CD8-positive, alpha-beta T cell (primary cell): ENCODE measurements at regions of chr14 and their contacts with region 1.

Region 1: GRCh38 chr14:55446218-55446654 is 5.8 kb upstream of the TBPL2 start:
- DNase-seq: peak; percentile 3 to 72 (median 53)
- ATAC-seq: no peak
- H3K4me3 ChIP-seq: no peak overlapping the region
- H3K4me3 Mint-ChIP-seq: no peak overlapping the region
- H3K27ac ChIP-seq: no peak overlapping the region
- H3K27ac Mint-ChIP-seq: no peak overlapping the region
- H3K4me1 ChIP-seq: no peaks in the 10 kb centered on the region
- H3K4me1 Mint-ChIP-seq: peaks cover 3% of the 10 kb centered on the region
- H3K27me3 ChIP-seq: no peaks in the 10 kb centered on the region
- H3K27me3 Mint-ChIP-seq: peaks cover 3% of the 10 kb centered on the region
- CTCF ChIP-seq: peak; percentile 80

Region 2: DNA sequence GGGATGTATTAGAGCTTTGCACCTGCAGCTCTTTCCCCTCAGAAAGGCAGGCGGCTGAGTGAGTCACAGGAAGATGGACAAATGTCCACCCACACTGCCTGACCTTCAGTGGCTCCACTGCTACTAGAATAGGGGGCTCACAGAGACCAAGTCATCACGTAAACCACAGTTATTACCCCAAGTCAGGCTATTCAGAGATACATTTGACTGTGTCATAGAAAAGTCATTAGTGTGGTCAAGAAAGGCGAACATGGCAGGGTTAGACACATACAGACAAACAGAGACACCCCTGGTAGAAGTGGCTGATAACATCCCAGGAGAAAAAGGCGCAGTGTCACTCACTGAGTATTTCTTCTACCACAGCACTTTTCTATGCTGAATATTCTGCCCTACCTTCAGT is 579.6 kb before region 1 on chr14:
- CTCF ChIA-PET with region 1: no interaction called
- POLR2A ChIA-PET with region 1: no interaction called
- intact Hi-C with region 1: no loop called
- DNase-seq: no peak
- ATAC-seq: no peak
- H3K4me3 ChIP-seq: no peak overlapping the region
- H3K4me3 Mint-ChIP-seq: no peak overlapping the region
- H3K27ac ChIP-seq: no peak overlapping the region
- H3K27ac Mint-ChIP-seq: no peak overlapping the region
- H3K4me1 ChIP-seq: peaks cover 9% of the 10 kb centered on the region
- H3K4me1 Mint-ChIP-seq: peaks cover 31% of the 10 kb centered on the region
- H3K27me3 ChIP-seq: no peaks in the 10 kb centered on the region
- H3K27me3 Mint-ChIP-seq: no peaks in the 10 kb centered on the region
- CTCF ChIP-seq: no peak

Region 3: DNA sequence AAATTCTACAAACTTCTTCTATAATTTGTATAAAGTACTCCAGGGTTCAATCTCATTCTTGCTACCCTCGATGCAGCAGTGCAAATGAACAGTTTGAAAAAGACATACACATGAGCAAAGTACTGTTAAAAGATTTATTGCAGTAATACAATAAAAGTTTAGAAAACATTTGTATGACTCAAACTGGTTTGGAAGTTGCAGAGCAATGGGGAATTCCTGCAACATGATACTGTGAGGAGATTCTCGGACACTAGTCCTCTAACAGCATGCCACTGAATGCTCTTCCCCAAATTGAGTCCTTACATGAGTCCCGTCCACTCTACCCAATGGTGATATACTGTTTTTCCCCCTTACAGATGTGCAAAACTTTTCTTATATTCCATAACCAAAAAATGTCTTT is 80.0 kb before region 1 on chr14:
- CTCF ChIA-PET with region 1: no interaction called
- POLR2A ChIA-PET with region 1: no interaction called
- intact Hi-C with region 1: no loop called
- DNase-seq: no peak
- ATAC-seq: no peak
- H3K4me3 ChIP-seq: no peak overlapping the region
- H3K4me3 Mint-ChIP-seq: no peak overlapping the region
- H3K27ac ChIP-seq: no peak overlapping the region
- H3K27ac Mint-ChIP-seq: no peak overlapping the region
- H3K4me1 ChIP-seq: no peaks in the 10 kb centered on the region
- H3K4me1 Mint-ChIP-seq: no peaks in the 10 kb centered on the region
- H3K27me3 ChIP-seq: no peaks in the 10 kb centered on the region
- H3K27me3 Mint-ChIP-seq: no peaks in the 10 kb centered on the region
- CTCF ChIP-seq: no peak

Region 4: DNA sequence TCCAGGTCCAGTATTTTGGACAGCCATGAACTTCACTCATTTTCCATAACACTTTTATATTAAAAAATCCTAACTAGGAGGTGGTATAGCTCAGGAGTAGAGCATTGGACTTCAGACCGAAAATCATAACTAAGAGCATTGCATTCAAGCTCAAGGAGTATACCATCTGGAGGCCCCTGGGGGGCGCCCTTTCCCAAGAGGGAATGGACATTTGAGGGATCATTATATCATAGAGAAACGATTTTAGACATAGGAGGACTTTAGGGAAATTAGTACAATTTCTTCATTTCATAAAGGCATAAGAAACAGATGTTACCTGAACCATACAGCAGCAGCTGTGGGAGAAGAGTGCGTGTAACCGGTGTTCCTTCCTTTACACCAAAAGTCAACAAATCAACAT is 29.4 kb before region 1 on chr14:
- CTCF ChIA-PET with region 1: interaction called, 10 read pairs
- POLR2A ChIA-PET with region 1: no interaction called
- intact Hi-C with region 1: no loop called
- DNase-seq: peak in 3 of 9 experiments; percentile 13 to 36 (median 31)
- ATAC-seq: no peak
- H3K4me3 ChIP-seq: no peak overlapping the region
- H3K4me3 Mint-ChIP-seq: no peak overlapping the region
- H3K27ac ChIP-seq: no peak overlapping the region
- H3K27ac Mint-ChIP-seq: no peak overlapping the region
- H3K4me1 ChIP-seq: peaks cover 6% of the 10 kb centered on the region
- H3K4me1 Mint-ChIP-seq: peaks cover 8% of the 10 kb centered on the region
- H3K27me3 ChIP-seq: no peaks in the 10 kb centered on the region
- H3K27me3 Mint-ChIP-seq: no peaks in the 10 kb centered on the region
- CTCF ChIP-seq: peak; percentile 44

Region 5: DNA sequence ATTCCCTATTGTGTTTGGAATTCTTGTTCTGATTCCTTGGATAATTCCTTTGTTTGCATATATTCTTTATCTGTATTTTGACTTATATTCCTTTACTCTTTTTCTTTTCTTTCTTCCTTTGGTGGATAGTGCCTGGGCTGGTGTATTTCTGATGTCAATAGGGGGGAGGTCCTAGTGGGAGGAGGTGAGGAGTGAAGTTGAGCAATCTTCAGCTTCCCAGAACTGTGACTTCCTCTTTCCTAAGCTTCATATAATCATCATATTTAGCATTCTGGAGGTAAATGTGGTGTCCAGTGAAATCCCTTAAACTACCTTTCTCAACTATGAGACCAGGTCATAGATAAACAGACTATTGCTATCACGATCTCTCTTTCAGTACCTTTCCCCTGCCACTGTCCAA is 23.8 kb after region 1 on chr14:
- CTCF ChIA-PET with region 1: interaction called, 25 read pairs
- POLR2A ChIA-PET with region 1: no interaction called
- intact Hi-C with region 1: no loop called
- DNase-seq: no peak
- ATAC-seq: no peak
- H3K4me3 ChIP-seq: no peak overlapping the region
- H3K4me3 Mint-ChIP-seq: no peak overlapping the region
- H3K27ac ChIP-seq: no peak overlapping the region
- H3K27ac Mint-ChIP-seq: no peak overlapping the region
- H3K4me1 ChIP-seq: no peaks in the 10 kb centered on the region
- H3K4me1 Mint-ChIP-seq: no peaks in the 10 kb centered on the region
- H3K27me3 ChIP-seq: no peaks in the 10 kb centered on the region
- H3K27me3 Mint-ChIP-seq: no peaks in the 10 kb centered on the region
- CTCF ChIP-seq: no peak

Region 6: DNA sequence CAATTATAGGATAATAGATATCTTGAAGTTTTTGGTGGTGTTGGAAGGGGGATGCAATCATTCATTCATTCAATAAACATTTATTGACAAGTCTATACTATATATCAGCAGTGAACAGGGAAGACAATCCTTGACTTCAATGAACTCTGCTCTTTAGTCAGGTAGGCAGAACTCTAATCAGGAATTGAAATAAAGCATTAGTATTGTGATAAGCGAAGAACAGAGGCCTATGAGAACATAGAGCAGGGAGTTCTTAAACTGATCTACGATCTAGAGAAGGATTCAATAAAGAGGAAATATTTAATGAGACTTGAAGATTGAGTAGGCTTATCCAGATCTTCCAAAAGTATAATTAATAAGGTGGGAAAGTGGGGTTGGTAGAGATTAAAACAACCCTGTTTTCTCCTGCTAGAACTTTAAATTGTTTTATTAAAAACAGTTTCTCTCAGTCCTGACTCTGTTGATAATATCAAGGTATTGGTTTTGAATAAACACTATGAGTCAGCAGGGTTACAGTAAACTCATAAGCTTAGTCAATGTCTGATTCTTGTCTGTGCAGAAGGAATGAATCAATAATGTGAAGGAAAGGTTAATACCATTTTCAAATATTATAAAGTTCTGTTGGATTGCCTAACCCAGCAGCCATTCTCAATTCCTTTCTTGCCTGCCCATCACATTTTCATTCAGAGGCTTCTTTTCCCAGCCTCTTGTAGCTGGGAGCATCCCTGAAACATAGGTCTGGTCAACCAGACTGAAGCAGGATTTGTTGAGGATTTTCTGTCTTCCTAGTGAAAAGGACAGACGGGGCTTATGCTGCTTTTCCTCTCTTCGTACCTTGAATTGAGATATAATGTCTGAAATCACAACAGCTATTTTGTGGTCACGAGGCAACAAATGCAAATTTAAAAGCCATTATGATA is 94.9 kb after region 1 on chr14:
- CTCF ChIA-PET with region 1: no interaction called
- POLR2A ChIA-PET with region 1: no interaction called
- intact Hi-C with region 1: no loop called
- DNase-seq: no peak
- ATAC-seq: no peak
- H3K4me3 ChIP-seq: no peak overlapping the region
- H3K4me3 Mint-ChIP-seq: no peak overlapping the region
- H3K27ac ChIP-seq: no peak overlapping the region
- H3K27ac Mint-ChIP-seq: no peak overlapping the region
- H3K4me1 ChIP-seq: no peaks in the 10 kb centered on the region
- H3K4me1 Mint-ChIP-seq: no peaks in the 10 kb centered on the region
- H3K27me3 ChIP-seq: no peaks in the 10 kb centered on the region
- H3K27me3 Mint-ChIP-seq: no peaks in the 10 kb centered on the region
- CTCF ChIP-seq: no peak